MCF 10A (cell line): ENCODE measurements at regions of chr2 and their contacts with region 1.

Region 1: DNA sequence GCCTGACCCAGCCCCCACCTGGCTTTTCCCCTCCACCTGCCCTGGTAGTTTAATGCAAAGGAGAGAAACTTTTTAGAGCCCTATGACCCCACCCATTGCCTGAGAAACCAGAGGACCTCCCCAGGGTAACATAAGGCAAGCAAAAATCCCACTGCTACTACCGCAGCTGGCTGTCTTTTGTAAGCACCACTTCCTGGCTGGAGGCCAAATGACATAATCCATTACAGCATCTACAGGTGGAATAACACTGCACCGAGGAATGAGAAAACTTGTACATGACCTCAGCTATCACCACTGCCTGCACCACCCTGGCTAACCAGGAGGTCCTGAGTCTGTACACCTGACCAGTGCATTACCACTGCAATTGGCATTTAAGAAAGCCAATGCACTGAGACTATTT is 149.6 kb upstream of the GALNT5 start:
- DNase-seq: peak; percentile 88
- H3K4me3 Mint-ChIP-seq: no peak overlapping the region
- H3K27ac Mint-ChIP-seq: no peak overlapping the region
- H3K4me1 Mint-ChIP-seq: peaks cover 8% of the 10 kb centered on the region
- H3K27me3 Mint-ChIP-seq: no peaks in the 10 kb centered on the region
- CTCF ChIP-seq: no peak

Region 2: DNA sequence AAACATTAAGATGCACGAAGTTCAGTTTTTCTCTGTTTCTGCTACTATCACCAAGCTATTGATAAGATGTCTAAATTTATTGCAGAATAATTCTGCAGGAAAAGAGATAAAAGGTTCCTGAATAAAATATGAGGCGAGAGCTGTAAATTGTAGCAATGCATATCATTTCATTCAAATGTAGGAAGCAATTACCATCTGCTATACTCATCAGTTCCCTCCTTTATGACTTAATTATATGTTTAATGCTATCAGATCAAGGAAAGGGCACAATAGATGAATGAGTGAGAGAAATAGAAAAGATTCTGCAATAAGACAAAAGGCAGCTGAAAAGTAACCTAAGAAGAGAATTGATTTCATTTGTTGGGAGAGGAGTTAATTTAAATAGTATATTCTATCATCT is 41.4 kb after region 1 on chr2:
- CTCF ChIA-PET with region 1: interaction called, 3 read pairs
- POLR2A ChIA-PET with region 1: no interaction called
- intact Hi-C with region 1: loop called (anchors 5 kb)
- DNase-seq: no peak
- H3K4me3 Mint-ChIP-seq: no peak overlapping the region
- H3K27ac Mint-ChIP-seq: no peak overlapping the region
- H3K4me1 Mint-ChIP-seq: peaks cover 5% of the 10 kb centered on the region
- H3K27me3 Mint-ChIP-seq: no peaks in the 10 kb centered on the region
- CTCF ChIP-seq: no peak

Region 3: DNA sequence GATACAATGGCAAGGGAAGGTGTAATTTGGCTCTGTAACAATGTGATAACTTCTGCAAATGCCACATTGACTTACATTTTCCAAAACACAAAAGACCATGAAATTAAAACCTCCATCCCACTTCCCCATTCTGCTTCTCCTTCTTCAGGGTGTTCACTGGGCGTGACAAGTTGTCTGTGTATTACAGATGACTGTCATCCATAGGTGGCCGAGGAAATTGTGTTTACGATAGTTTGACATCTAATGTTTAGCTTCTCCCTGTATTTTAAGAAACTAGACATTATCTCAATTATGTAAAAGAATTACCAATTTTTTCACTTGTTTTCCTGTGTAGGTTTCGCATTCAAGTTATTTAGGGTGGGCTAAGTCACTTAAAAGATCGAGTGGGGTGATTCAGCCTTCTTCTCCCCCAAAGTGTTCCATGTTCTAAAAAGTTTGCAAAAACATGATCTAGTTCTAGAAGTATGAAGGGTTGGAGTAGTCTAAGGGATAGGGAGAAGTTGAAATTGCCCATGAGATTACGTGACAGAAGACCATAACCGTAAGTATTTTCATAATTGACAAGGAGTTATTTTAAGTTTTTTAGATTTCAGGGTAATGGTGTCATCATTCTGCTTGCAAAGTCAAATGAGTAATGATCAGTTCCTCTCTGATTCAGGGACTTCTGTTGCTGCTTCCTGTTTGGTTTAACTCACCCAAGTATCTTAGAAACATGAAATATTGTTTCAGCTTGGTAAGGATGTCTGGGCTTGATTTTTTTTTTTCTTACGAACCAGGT is 361.2 kb after region 1 on chr2:
- CTCF ChIA-PET with region 1: no interaction called
- POLR2A ChIA-PET with region 1: no interaction called
- intact Hi-C with region 1: no loop called
- DNase-seq: no peak
- H3K4me3 Mint-ChIP-seq: no peak overlapping the region
- H3K27ac Mint-ChIP-seq: no peak overlapping the region
- H3K4me1 Mint-ChIP-seq: peaks cover 7% of the 10 kb centered on the region
- H3K27me3 Mint-ChIP-seq: no peaks in the 10 kb centered on the region
- CTCF ChIP-seq: no peak